H1 (cell line): ENCODE measurements at regions of chr2 and their contacts with region 1.

Region 1: GRCh38 chr2:70647873-70648481 is 94.4 kb upstream of the TGFA start:
- DNase-seq: peak; percentile 73 to 95
- H3K4me3 ChIP-seq: no peak overlapping the region
- H3K27ac ChIP-seq: no peak overlapping the region
- H3K4me1 ChIP-seq: no peaks in the 10 kb centered on the region
- H3K27me3 ChIP-seq: peaks cover 0 to 3% (median under 1%) of the 10 kb centered on the region in 4 experiments; a peak in 3 of 7 replicates
- CTCF ChIP-seq: peak; percentile 95 to 100 (median 100)
- EP300 ChIP-seq: no peak
- POLR2A ChIP-seq: no peak
- RAD21 ChIP-seq: peak; percentile 98 to 99

Region 2: GRCh38 chr2:70321370-70321769 is 326.6 kb before region 1 on chr2:
- CTCF ChIA-PET with region 1: interaction called, 12 read pairs
- POLR2A ChIA-PET with region 1: no interaction called
- DNase-seq: no peak
- H3K4me3 ChIP-seq: no peak overlapping the region
- H3K27ac ChIP-seq: no peak overlapping the region
- H3K4me1 ChIP-seq: no peaks in the 10 kb centered on the region
- H3K27me3 ChIP-seq: no peaks in the 10 kb centered on the region
- CTCF ChIP-seq: no peak
- EP300 ChIP-seq: no peak
- POLR2A ChIP-seq: no peak
- RAD21 ChIP-seq: no peak

Region 3: DNA sequence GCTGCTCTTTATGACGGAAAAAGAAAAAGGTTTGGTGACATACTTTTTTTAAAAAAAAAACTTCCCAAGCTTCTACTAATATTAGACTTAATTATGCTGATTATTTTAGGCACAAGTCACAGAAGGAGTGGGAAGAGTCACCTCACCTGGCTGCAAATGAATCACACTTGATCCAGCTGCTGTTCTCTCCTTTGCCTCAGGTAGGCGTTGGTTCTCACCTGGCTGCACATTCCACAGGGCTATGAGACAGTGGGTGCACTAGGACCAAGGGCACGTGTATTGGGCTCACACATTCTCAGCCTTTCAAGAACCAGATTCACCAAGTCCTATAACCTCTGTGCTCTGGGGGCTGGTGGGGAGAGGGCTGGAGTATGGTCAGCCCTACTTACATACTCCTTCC is 187.6 kb before region 1 on chr2:
- CTCF ChIA-PET with region 1: interaction called, 12 read pairs
- POLR2A ChIA-PET with region 1: no interaction called
- DNase-seq: no peak
- H3K4me3 ChIP-seq: no peak overlapping the region
- H3K27ac ChIP-seq: no peak overlapping the region
- H3K4me1 ChIP-seq: peaks cover 0 to 10% (median 4%) of the 10 kb centered on the region in 4 experiments; a peak in 5 of 7 replicates
- H3K27me3 ChIP-seq: no peaks in the 10 kb centered on the region
- CTCF ChIP-seq: peak; percentile 66 to 84 (median 75)
- EP300 ChIP-seq: no peak
- POLR2A ChIP-seq: no peak
- RAD21 ChIP-seq: peak; percentile 50 to 70

Region 4: GRCh38 chr2:70616168-70616694 is 31.7 kb before region 1 on chr2:
- CTCF ChIA-PET with region 1: interaction called, 51 read pairs
- POLR2A ChIA-PET with region 1: no interaction called
- DNase-seq: no peak
- H3K4me3 ChIP-seq: no peak overlapping the region
- H3K27ac ChIP-seq: no peak overlapping the region
- H3K4me1 ChIP-seq: peaks cover 1 to 6% (median 2%) of the 10 kb centered on the region in 4 experiments; a peak in 5 of 7 replicates
- H3K27me3 ChIP-seq: no peaks in the 10 kb centered on the region; a peak in 1 of 7 replicates
- CTCF ChIP-seq: no peak
- EP300 ChIP-seq: no peak
- POLR2A ChIP-seq: no peak
- RAD21 ChIP-seq: no peak

Region 5: DNA sequence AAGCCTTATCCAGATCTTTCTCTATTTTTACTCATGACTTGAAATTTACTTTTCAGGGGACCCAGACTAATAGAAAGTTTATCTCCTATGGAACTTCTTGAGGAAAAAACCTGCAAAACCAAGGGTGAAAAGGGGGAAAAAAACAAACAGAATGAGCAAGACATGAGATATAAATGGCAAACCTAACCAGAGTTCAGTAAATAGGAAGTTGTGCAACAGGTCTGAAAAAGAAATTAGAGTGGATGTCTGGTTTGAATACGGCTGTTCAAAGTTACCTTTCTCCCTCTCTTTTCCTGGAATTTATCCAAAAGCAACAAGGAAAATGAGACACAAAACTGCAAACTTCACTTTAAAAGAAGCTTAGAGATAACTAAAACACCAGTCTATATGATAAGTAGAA is 15.6 kb before region 1 on chr2:
- CTCF ChIA-PET with region 1: interaction called, 35 read pairs
- POLR2A ChIA-PET with region 1: no interaction called
- DNase-seq: no peak
- H3K4me3 ChIP-seq: no peak overlapping the region
- H3K27ac ChIP-seq: no peak overlapping the region
- H3K4me1 ChIP-seq: no peaks in the 10 kb centered on the region; a peak in 2 of 7 replicates
- H3K27me3 ChIP-seq: peaks cover 0 to 1% (median 0%) of the 10 kb centered on the region in 4 experiments; a peak in 1 of 7 replicates
- CTCF ChIP-seq: no peak
- EP300 ChIP-seq: no peak
- POLR2A ChIP-seq: no peak
- RAD21 ChIP-seq: no peak